ENCODE measurements at regions of chr3 and their contacts with region 1.

Region 1: DNA sequence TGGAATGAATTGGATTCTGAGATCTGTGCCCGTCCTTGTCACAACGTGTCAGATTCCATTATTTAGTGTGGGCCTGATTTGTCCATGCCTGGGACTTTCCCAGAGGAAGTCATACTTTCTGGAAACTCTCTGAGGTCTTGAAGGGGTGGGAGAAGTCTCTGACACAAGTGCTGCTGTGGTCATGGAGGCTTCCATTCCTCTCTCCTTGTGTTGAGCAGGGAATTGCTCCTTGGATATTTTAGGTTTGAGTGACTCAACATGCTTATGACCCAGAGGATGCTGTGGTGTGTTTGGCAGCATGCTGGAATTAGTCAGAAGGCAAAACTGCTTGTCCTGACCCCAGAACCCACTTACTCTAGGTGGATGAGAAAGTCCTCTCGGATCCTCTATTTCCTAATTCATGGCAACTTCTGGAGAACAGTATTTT is 132.1 kb downstream of the LPP start:
- DNase-seq: no peak
- H3K4me3 Mint-ChIP-seq: peak overlapping the region; percentile 4
- H3K27ac Mint-ChIP-seq: peak overlapping the region; percentile 80
- H3K4me1 Mint-ChIP-seq: peaks cover 48% of the 10 kb centered on the region
- H3K27me3 Mint-ChIP-seq: no peaks in the 10 kb centered on the region

Region 2: GRCh38 chr3:187986514-187986934 is 299.6 kb before region 1 on chr3:
- intact Hi-C with region 1: loop called (anchors 2 kb)
- DNase-seq: peak; percentile 77
- H3K4me3 Mint-ChIP-seq: peak overlapping the region; percentile 56
- H3K27ac Mint-ChIP-seq: peak overlapping the region; percentile 84
- H3K4me1 Mint-ChIP-seq: peaks cover 57% of the 10 kb centered on the region
- H3K27me3 Mint-ChIP-seq: no peaks in the 10 kb centered on the region

Region 3: GRCh38 chr3:188006726-188007393 is 279.2 kb before region 1 on chr3:
- intact Hi-C with region 1: no loop called
- DNase-seq: peak; percentile 57
- H3K4me3 Mint-ChIP-seq: no peak overlapping the region
- H3K27ac Mint-ChIP-seq: no peak overlapping the region
- H3K4me1 Mint-ChIP-seq: peaks cover 37% of the 10 kb centered on the region
- H3K27me3 Mint-ChIP-seq: no peaks in the 10 kb centered on the region

Region 4: GRCh38 chr3:188257384-188258026 is 28.6 kb before region 1 on chr3:
- intact Hi-C with region 1: loop called (anchors 1 kb)
- DNase-seq: no peak
- H3K4me3 Mint-ChIP-seq: no peak overlapping the region
- H3K27ac Mint-ChIP-seq: peak overlapping the region; percentile 85
- H3K4me1 Mint-ChIP-seq: peaks cover 47% of the 10 kb centered on the region
- H3K27me3 Mint-ChIP-seq: no peaks in the 10 kb centered on the region

Region 5: GRCh38 chr3:188264226-188265213 is 21.6 kb before region 1 on chr3:
- intact Hi-C with region 1: loop called (anchors 2 kb)
- DNase-seq: no peak
- H3K4me3 Mint-ChIP-seq: no peak overlapping the region
- H3K27ac Mint-ChIP-seq: no peak overlapping the region
- H3K4me1 Mint-ChIP-seq: peaks cover 12% of the 10 kb centered on the region
- H3K27me3 Mint-ChIP-seq: no peaks in the 10 kb centered on the region

Region 6: DNA sequence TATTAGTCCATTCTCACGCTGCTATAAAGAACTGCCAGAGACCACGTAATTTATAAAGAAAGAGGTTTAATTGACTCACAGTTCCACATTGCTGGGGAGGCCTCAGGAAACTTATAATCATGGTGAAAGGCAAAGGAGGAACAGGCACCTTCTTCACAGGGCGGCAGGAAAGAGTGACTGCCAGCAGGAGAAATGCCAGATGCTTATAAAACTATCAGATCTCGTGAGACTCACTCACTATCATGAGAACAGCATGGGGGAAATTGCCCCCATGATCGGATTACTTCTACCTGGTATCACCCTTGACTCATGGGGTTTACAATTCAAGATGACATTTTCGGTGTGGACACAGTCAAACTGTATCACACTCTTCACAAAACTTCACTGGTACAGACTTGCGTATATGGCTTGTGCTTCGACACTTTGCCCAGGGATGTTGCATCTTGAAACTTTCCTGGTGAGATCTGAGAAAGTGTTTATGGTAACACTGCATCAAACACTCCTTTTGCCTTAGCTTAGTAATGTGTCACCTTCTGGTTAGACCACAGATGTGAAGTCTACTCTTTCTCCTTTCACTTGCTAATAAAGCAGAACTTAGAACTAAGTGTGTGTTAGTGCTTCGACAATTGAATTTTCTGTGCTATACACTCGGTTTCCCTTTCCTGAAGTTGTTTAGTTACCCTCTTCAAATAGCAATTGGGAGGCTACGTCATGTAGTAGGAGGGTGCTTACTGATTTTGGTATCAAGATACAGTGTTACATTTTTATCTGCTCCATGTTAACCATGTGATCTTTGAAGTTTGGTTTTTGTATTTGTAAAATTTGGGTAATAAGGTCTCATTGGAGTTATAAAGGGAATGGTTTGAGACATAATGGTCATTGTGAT is 53.6 kb after region 1 on chr3:
- intact Hi-C with region 1: loop called (anchors 1 kb)
- DNase-seq: peak; percentile 81
- H3K4me3 Mint-ChIP-seq: peak overlapping the region; percentile 66
- H3K27ac Mint-ChIP-seq: peak overlapping the region; percentile 93
- H3K4me1 Mint-ChIP-seq: peaks cover 34% of the 10 kb centered on the region
- H3K27me3 Mint-ChIP-seq: peaks cover 6% of the 10 kb centered on the region

Region 7: DNA sequence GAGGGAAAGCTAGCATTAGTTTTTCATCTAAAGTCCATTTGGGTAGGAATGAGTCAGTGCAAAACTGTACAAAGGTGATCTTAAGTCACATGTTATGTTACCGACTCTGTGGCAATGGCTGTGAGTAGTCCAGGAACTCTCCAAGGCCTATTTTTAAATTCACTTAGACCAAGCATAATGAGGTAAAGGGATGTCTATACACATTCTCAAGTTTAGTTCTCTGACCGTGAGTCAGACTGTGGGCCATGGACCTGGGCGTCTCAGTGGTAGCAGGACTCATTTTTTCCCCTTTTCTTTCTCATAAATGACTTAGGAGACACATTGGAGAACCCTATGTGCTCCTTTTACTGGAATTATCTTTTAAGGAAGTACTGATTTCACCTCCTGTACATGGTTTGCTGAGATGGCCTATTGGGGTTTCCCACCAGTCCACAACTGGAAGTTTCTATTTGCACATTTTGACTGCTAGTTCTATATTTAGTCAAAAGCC is 397.0 kb after region 1 on chr3:
- intact Hi-C with region 1: loop called (anchors 10 kb)
- DNase-seq: no peak
- H3K4me3 Mint-ChIP-seq: no peak overlapping the region
- H3K27ac Mint-ChIP-seq: peak overlapping the region; percentile 47
- H3K4me1 Mint-ChIP-seq: peaks cover 28% of the 10 kb centered on the region
- H3K27me3 Mint-ChIP-seq: no peaks in the 10 kb centered on the region

Measured in activated CD4-positive, alpha-beta T cell treated with anti-CD3 and anti-CD28 coated beads, Interleukin-2, amount 10 ng/mL, durations not matched to agents 24 days and 14 days (primary cell).